Breast epithelium (tissue), 4 donors: ENCODE measurements at regions of chr4 and their contacts with region 1.

Region 1: GRCh38 chr4:61173799-61174198 is 26.3 kb upstream of the ADGRL3 start:
- DNase-seq: no peak
- H3K4me3 ChIP-seq: no peak overlapping the region
- H3K27ac ChIP-seq: no peak overlapping the region
- H3K4me1 ChIP-seq: no peaks in the 10 kb centered on the region
- H3K27me3 ChIP-seq: no peaks in the 10 kb centered on the region
- CTCF ChIP-seq: no peak
- POLR2A ChIP-seq: no peak

Region 2: DNA sequence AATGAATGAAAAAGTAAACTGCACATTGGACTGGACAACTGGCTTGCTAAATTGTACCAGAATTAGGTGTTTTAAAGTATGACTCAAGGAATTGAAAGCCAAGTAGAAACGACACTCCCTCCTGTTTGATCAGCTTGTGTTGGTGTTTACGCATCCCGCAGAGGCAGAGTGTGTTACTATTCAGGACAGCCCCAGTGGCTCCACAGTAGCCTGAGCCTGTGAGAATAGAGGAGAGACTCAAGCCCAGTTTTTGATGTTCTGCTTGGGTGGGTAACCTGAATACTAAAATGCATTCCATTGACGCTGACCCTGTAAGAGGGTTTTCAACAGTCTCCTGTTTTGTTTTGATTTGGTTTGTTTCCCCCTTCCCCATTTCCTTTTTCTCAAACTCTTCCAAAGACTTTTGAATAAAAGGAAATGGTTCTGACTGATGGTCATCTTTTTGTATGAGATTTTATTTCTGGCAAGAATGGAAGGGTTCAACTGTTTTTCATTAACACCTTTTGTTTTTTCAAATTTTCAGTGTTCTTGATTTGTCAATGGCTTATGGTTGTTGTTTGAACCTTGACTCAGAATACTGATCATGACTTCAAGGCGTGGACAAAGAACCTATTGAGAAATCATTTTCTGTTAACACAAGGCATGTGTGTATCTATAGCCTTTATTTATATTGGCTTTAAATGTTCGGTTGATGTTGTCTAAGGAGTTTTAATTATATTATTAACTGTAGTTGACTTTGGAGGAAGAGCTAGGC is 36.6 kb after region 1 on chr4:
- intact Hi-C with region 1: loop called (anchors 2 kb)
- DNase-seq: no peak
- H3K4me3 ChIP-seq: no peak overlapping the region
- H3K27ac ChIP-seq: no peak overlapping the region
- H3K4me1 ChIP-seq: no peaks in the 10 kb centered on the region
- H3K27me3 ChIP-seq: no peaks in the 10 kb centered on the region
- CTCF ChIP-seq: no peak
- POLR2A ChIP-seq: no peak

Region 3: GRCh38 chr4:62288808-62289541 is 1115.2 kb after region 1 on chr4:
- intact Hi-C with region 1: no loop called
- DNase-seq: no peak
- H3K4me3 ChIP-seq: no peak overlapping the region
- H3K27ac ChIP-seq: no peak overlapping the region
- H3K4me1 ChIP-seq: no peaks in the 10 kb centered on the region
- H3K27me3 ChIP-seq: no peaks in the 10 kb centered on the region
- CTCF ChIP-seq: no peak
- POLR2A ChIP-seq: no peak